CD4-positive, alpha-beta T cell (primary cell): ENCODE measurements at regions of chr12 and their contacts with region 1.

Region 1: GRCh38 chr12:56630160-56630632 is at the start of gene BAZ2A:
- DNase-seq: peak; percentile 71 to 93 (median 81)
- ATAC-seq: peak; percentile 72
- H3K4me3 ChIP-seq: peak within 1 kb of the TSS; percentile 100
- H3K4me3 Mint-ChIP-seq: peak within 1 kb of the TSS; percentile 93
- H3K27ac ChIP-seq: peak within 1 kb of the TSS; percentile 88 to 96
- H3K27ac Mint-ChIP-seq: peak within 1 kb of the TSS; percentile 94
- H3K4me1 ChIP-seq: peaks cover 65% of the 10 kb centered on the region
- H3K4me1 Mint-ChIP-seq: peaks cover 78% of the 10 kb centered on the region
- H3K27me3 ChIP-seq: no peaks in the 10 kb centered on the region
- H3K27me3 Mint-ChIP-seq: no peaks in the 10 kb centered on the region
- CTCF ChIP-seq: no peak
- total RNA-seq, gene BAZ2A: 207 to 211 TPM

Region 2: DNA sequence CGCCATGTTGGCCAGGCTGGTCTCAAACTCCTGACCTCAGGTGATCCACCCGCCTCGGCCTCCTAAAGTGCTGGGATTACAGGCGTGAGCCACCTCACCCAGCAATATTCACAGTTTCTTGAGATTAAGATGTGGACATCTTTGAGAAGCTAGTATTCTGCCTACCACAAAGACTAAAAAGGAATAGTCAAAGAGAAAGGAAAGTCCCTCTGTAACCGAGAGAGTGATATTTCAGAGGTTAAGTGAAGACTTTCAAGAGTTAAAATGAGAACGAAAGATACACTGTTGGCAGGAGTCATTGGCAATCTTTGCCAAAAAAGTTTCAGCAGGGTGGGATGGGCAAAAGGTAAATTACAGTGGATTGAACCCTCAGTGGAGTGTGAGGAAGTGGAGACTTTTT is 683.6 kb before region 1 on chr12:
- CTCF ChIA-PET with region 1: no interaction called
- POLR2A ChIA-PET with region 1: no interaction called
- intact Hi-C with region 1: no loop called
- DNase-seq: no peak
- ATAC-seq: no peak
- H3K4me3 ChIP-seq: no peak overlapping the region
- H3K4me3 Mint-ChIP-seq: no peak overlapping the region
- H3K27ac ChIP-seq: no peak overlapping the region
- H3K27ac Mint-ChIP-seq: peak overlapping the region; percentile 72
- H3K4me1 ChIP-seq: peaks cover 19% of the 10 kb centered on the region
- H3K4me1 Mint-ChIP-seq: peaks cover 40% of the 10 kb centered on the region
- H3K27me3 ChIP-seq: no peaks in the 10 kb centered on the region
- H3K27me3 Mint-ChIP-seq: no peaks in the 10 kb centered on the region
- CTCF ChIP-seq: no peak

Region 3: DNA sequence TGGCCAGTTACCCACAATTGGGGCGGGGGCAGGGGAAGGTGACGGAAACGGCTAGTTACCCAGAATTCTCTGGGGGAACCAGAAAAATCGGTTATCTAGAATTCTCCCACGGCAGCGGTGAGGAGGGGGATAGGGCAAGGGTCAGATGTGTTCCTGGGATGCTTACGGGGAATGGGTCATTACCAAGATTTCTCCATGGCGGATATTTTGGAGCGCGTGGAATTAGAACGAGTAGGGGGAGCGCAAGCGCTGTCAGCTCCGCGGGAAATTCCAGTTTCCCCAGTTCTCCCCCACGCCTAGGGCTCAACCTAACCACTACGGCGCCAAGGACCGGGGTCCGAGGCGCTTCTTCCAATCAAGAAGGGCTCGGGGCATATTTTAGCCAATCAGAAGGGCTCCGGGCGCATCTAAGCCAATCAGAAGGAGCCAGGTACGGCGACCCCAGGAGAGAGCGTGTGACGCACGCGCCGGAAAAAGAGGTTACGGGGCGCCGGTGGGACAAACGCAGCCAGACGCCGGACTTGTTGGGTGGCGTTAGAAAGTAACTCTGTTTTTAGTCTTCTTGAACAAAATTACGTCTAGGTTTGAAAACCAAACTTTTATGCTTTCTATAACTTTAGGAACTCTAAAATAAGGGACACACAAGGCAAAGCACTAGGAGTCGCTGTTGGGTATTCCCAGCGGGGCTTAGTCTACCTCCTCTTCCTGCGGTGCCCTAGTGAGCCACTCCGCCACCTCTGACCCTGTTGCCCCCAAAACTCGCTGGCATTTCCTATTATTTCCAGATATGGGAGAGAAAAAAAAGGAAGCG is 296.3 kb before region 1 on chr12 and contains the start of gene PAN2:
- CTCF ChIA-PET with region 1: no interaction called
- POLR2A ChIA-PET with region 1: interaction called, 10 read pairs
- intact Hi-C with region 1: no loop called
- DNase-seq: peak; percentile 84 to 98 (median 89)
- ATAC-seq: peak; percentile 74
- H3K4me3 ChIP-seq: peak within 1 kb of the TSS; percentile 71
- H3K4me3 Mint-ChIP-seq: peak within 1 kb of the TSS; percentile 94
- H3K27ac ChIP-seq: peak within 1 kb of the TSS; percentile 99 to 100
- H3K27ac Mint-ChIP-seq: peak within 1 kb of the TSS; percentile 100
- H3K4me1 ChIP-seq: peaks cover 32% of the 10 kb centered on the region
- H3K4me1 Mint-ChIP-seq: peaks cover 56% of the 10 kb centered on the region
- H3K27me3 ChIP-seq: no peaks in the 10 kb centered on the region
- H3K27me3 Mint-ChIP-seq: no peaks in the 10 kb centered on the region
- CTCF ChIP-seq: peak; percentile 73
- total RNA-seq, gene PAN2: 104 to 107 TPM

Region 4: DNA sequence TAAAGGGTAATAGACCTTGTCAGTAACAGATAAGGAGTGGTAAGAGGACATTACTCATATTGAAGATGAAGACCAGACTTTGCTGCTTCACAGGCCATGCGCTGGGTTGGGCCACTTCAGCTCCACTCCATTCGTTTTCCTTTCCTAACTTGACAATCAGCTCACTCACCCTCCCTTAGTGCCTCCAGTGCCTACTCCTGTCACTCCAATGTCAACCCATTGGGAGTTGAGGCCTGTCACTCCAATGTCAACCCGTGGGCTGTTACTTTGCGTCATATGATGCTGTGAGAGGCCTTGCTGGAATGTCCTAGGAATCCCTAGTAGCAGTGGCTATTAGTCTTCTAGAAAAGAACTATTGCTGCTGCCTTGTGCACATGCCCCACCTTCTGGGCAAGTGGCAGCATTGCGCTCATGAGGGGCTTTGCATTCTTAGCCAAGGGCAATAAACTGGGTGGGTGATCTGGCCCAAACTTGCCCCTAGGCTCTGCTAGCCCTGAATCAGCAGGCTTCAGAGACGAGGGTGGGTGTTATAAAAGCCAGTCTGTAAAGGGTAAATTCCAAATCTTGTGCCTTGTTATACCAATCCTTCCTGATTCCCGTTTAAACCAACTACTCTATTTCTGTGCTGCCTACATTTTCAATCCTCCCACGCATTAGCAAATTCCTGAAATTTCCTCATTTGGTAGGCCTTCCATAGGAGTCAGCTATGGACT is 36.1 kb before region 1 on chr12:
- CTCF ChIA-PET with region 1: no interaction called
- POLR2A ChIA-PET with region 1: interaction called, 3 read pairs
- intact Hi-C with region 1: loop called in 1 of 2 experiments (anchors 5 kb)
- DNase-seq: peak; percentile 35 to 75 (median 48)
- ATAC-seq: peak; percentile 85
- H3K4me3 ChIP-seq: no peak overlapping the region
- H3K4me3 Mint-ChIP-seq: no peak overlapping the region
- H3K27ac ChIP-seq: no peak overlapping the region
- H3K27ac Mint-ChIP-seq: peak overlapping the region; percentile 6
- H3K4me1 ChIP-seq: no peaks in the 10 kb centered on the region
- H3K4me1 Mint-ChIP-seq: peaks cover 8% of the 10 kb centered on the region
- H3K27me3 ChIP-seq: no peaks in the 10 kb centered on the region
- H3K27me3 Mint-ChIP-seq: no peaks in the 10 kb centered on the region
- CTCF ChIP-seq: peak; percentile 79

Region 5: GRCh38 chr12:56616925-56617324 is 13.3 kb before region 1 on chr12:
- CTCF ChIA-PET with region 1: interaction called, 30 read pairs
- POLR2A ChIA-PET with region 1: interaction called, 69 read pairs
- intact Hi-C with region 1: no loop called
- DNase-seq: no peak
- ATAC-seq: no peak
- H3K4me3 ChIP-seq: no peak overlapping the region
- H3K4me3 Mint-ChIP-seq: no peak overlapping the region
- H3K27ac ChIP-seq: no peak overlapping the region
- H3K27ac Mint-ChIP-seq: no peak overlapping the region
- H3K4me1 ChIP-seq: peaks cover 15% of the 10 kb centered on the region
- H3K4me1 Mint-ChIP-seq: peaks cover 23% of the 10 kb centered on the region
- H3K27me3 ChIP-seq: no peaks in the 10 kb centered on the region
- H3K27me3 Mint-ChIP-seq: no peaks in the 10 kb centered on the region
- CTCF ChIP-seq: no peak

Region 6: DNA sequence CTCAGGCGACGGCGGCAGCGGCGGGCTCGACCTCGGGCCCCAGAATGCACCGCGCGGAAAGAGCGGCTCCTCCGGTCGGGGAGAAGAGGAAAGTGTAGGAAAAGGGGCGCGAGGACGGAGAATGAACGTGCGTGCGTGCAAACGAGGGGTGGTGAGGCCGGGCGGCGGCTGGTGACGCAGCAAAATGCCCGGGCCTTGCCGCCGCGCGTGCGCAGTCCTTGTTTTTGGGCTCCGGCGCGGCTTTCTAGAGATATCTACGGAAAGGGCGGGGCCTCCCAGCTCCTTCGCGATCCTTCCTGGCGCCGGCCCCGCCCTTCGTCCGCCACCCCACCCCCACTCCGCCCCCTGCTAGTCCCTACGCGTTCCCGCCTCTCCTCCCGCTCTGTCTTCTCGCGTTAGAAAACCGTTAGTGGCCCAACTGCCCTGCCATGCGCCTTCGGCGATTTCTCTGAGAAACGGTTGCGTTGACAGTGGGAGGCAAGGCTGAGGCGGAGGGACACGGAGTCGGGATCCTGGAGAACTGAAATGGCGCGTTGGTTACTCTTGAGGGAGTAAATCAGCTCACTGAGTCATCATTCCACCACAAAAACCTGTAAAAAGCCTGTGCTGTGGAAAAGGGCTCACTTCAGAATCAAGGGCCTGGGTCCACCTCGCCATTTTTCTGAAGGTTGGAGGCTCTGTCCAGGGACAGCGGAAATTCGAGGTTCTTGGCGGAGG is 58.1 kb after region 1 on chr12 and contains the start of gene PTGES3:
- CTCF ChIA-PET with region 1: interaction called, 12 read pairs
- POLR2A ChIA-PET with region 1: interaction called, 155 read pairs
- intact Hi-C with region 1: no loop called
- DNase-seq: peak; percentile 93 to 100 (median 97)
- ATAC-seq: peak; percentile 73
- H3K4me3 ChIP-seq: peak within 1 kb of the TSS; percentile 96
- H3K4me3 Mint-ChIP-seq: peak within 1 kb of the TSS; percentile 100
- H3K27ac ChIP-seq: peak within 1 kb of the TSS; percentile 98 to 99
- H3K27ac Mint-ChIP-seq: peak within 1 kb of the TSS; percentile 96
- H3K4me1 ChIP-seq: peaks cover 39% of the 10 kb centered on the region
- H3K4me1 Mint-ChIP-seq: peaks cover 43% of the 10 kb centered on the region
- H3K27me3 ChIP-seq: no peaks in the 10 kb centered on the region
- H3K27me3 Mint-ChIP-seq: no peaks in the 10 kb centered on the region
- CTCF ChIP-seq: no peak
- total RNA-seq, gene PTGES3: 146 to 154 TPM